Kidney (tissue), 22 donors: ENCODE measurements at regions of chr18 and their contacts with region 1.

Region 1: GRCh38 chr18:62186774-62187542 is at the starts of genes PIGN and RELCH:
- DNase-seq: peak; percentile 98 to 100 (median 99)
- H3K4me3 ChIP-seq: peak within 1 kb of the TSS; percentile 84 to 99 (median 96)
- H3K27ac ChIP-seq: peak within 1 kb of the TSS; percentile 81 to 84
- H3K4me1 ChIP-seq: peaks cover 0 to 8% (median 0%) of the 10 kb centered on the region in 3 donors
- H3K27me3 ChIP-seq: no peaks in the 10 kb centered on the region
- CTCF ChIP-seq: peak; percentile 4
- total RNA-seq, gene PIGN: 30.5 TPM
- total RNA-seq, gene RELCH: 39.0 TPM

Region 2: GRCh38 chr18:62249478-62250097 is 62.6 kb after region 1 on chr18:
- intact Hi-C with region 1: loop called (anchors 10 kb)
- DNase-seq: peak; percentile 47 to 85 (median 65)
- H3K4me3 ChIP-seq: no peak overlapping the region
- H3K27ac ChIP-seq: no peak overlapping the region
- H3K4me1 ChIP-seq: no peaks in the 10 kb centered on the region
- H3K27me3 ChIP-seq: no peaks in the 10 kb centered on the region
- CTCF ChIP-seq: peak; percentile 77